Heart left ventricle (tissue), 16 donors: ENCODE measurements at regions of chr18 and their contacts with region 1.

Region 1: GRCh38 chr18:13159579-13159978 is 59.0 kb upstream of the LDLRAD4 start:
- DNase-seq: no peak
- ATAC-seq: peak in 2 of 4 donors; percentile 29 to 33
- H3K4me3 ChIP-seq: no peak overlapping the region
- H3K27ac ChIP-seq: no peak overlapping the region
- H3K4me1 ChIP-seq: no peaks in the 10 kb centered on the region
- H3K27me3 ChIP-seq: no peaks in the 10 kb centered on the region
- CTCF ChIP-seq: peak; percentile 71 to 88 (median 82)
- POLR2A ChIP-seq: no peak

Region 2: DNA sequence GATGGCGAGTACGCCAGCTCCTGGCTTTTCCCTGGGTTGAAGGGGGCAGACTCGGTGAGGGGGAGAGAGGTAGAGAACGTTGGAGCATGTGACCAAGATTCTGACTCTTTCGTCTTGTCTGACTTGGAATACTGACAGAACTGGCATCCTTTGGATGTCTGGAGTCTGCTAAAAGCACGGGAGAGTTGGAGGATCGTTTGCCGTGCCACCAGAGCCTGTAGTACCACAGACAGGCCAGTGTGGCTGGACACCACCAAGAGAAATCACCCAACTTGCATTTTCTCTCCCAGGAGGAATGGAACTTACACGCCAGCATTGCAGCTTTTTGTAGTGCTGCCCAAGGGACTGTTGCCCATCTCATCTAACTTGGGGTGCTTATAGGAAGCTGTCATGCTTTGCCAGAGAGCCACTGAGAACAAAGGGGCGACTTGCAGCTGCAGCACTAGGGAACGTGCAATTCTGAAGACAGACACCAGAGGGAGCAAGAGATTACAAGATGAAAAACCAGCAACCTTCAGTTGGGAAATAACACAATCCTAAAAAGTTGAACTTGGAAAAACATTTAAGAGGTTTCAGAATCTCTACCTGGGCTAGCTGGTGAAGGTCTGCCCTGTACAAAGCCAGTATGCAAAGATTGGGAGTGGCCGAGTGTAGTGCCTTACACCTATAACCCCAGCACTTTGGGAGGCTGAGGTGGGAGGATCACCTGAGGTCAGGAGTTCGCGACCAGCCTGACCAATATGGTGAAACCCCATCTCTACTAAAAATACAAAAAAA is 432.6 kb before region 1 on chr18:
- intact Hi-C with region 1: loop called in 4 of 10 experiments (anchors 5 to 10 kb)
- DNase-seq: peak in 2 of 5 donors; percentile 44 to 49
- ATAC-seq: peak; percentile 37 to 68 (median 66)
- H3K4me3 ChIP-seq: no peak overlapping the region
- H3K27ac ChIP-seq: no peak overlapping the region
- H3K4me1 ChIP-seq: no peaks in the 10 kb centered on the region
- H3K27me3 ChIP-seq: no peaks in the 10 kb centered on the region
- CTCF ChIP-seq: peak; percentile 71 to 93 (median 87)
- POLR2A ChIP-seq: no peak

Region 3: GRCh38 chr18:12737243-12737902 is 422.2 kb before region 1 on chr18:
- intact Hi-C with region 1: loop called in 1 of 10 experiments (anchors 10 kb)
- DNase-seq: no peak
- ATAC-seq: no peak
- H3K4me3 ChIP-seq: no peak overlapping the region
- H3K27ac ChIP-seq: no peak overlapping the region
- H3K4me1 ChIP-seq: no peaks in the 10 kb centered on the region
- H3K27me3 ChIP-seq: no peaks in the 10 kb centered on the region
- CTCF ChIP-seq: no peak
- POLR2A ChIP-seq: no peak

Region 4: GRCh38 chr18:12768625-12769024 is 391.0 kb before region 1 on chr18:
- intact Hi-C with region 1: loop called in 1 of 10 experiments (anchors 10 kb)
- DNase-seq: no peak
- ATAC-seq: no peak
- H3K4me3 ChIP-seq: no peak overlapping the region
- H3K27ac ChIP-seq: no peak overlapping the region
- H3K4me1 ChIP-seq: peaks cover 0 to 3% (median 0%) of the 10 kb centered on the region in 12 donors
- H3K27me3 ChIP-seq: no peaks in the 10 kb centered on the region
- CTCF ChIP-seq: no peak
- POLR2A ChIP-seq: no peak

Region 5: DNA sequence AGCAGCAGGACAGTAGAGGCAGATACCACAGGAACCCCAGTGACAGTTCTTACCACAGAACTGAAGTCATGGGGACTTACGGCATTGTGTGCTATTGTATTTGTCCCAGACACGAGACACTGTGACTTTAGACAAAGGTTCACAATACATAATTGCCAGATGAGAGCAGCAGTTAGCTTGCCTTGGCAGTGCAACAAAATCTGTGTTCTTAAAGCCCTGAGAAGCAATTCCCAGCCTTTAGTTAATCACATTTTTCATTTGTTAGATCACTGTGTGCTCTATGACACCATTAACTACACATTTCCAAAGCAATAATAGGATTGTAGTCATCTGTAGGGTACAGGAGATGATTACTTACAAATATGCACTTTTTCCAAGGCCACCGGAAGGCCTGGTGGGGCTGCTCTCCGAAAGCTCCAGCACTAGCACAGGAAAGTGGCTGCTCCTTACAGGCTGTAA is 38.6 kb before region 1 on chr18:
- intact Hi-C with region 1: loop called in 3 of 10 experiments (anchors 5 to 10 kb)
- DNase-seq: no peak
- ATAC-seq: peak; percentile 31 to 71 (median 62)
- H3K4me3 ChIP-seq: no peak overlapping the region
- H3K27ac ChIP-seq: peak overlapping the region in 6 of 12 donors; percentile 4 to 46 (median 22)
- H3K4me1 ChIP-seq: peaks cover 0 to 9% (median 0%) of the 10 kb centered on the region in 12 donors
- H3K27me3 ChIP-seq: no peaks in the 10 kb centered on the region
- CTCF ChIP-seq: no peak
- POLR2A ChIP-seq: no peak